Caco-2 (cell line): ENCODE measurements at regions of chr12 and their contacts with region 1.

Region 1: DNA sequence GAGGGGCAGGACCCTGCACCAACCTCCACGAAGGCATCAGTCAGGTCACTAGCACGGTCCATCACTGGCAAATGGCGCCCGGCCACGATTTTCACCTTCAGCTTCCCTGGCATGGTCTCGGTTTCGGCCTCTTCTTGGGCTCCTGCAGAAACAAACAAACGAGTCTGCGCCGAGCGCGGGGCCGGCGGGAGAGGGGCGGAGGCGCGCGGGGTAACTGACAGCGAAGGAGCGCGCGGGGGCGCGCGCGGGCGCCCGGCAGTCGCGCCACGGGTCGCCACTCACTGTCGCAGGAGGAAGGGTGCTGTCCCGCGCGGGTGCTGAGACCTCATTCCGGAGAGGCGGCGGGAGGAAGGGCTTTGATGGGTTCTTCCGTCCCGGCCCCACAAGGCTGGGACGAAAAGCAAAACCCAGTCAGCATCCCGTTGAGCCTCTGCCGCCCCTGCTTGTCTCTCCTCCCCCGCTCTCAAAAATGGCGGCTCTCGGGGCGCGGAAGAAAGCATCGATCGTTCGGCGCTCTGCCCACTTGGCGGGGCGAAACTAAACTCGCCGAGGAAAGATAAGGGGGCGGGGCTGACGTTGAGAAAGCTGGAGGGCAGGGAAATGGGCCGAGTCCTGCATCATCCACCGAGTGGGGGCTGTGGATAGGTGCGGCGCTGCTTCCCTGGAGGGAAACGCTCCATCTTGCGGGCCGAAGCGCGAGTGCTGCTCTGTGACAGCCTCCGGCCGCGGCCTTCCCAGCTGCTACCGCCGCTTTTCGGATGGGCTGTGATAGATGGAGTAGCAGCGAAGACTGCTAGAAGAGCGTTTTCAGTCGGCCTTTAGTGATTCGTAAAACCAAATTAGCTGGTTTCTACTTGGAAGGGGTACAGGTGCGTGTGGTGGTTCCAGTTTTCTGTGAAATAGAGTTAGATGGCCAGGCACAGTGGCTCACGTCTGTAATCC is at the start of gene C2CD5:
- DNase-seq: peak; percentile 100
- H3K4me3 ChIP-seq: peak within 1 kb of the TSS; percentile 69
- H3K4me3 Mint-ChIP-seq: peak within 1 kb of the TSS; percentile 87
- H3K27ac Mint-ChIP-seq: peak within 1 kb of the TSS; percentile 89
- H3K4me1 ChIP-seq: peaks cover 8% of the 10 kb centered on the region
- H3K4me1 Mint-ChIP-seq: peaks cover 18% of the 10 kb centered on the region
- H3K27me3 ChIP-seq: no peaks in the 10 kb centered on the region
- H3K27me3 Mint-ChIP-seq: no peaks in the 10 kb centered on the region
- CTCF ChIP-seq: peak in 1 of 2 experiments; percentile 58
- total RNA-seq, gene C2CD5: 44.6 and 51.5 TPM in 2 replicates

Region 2: DNA sequence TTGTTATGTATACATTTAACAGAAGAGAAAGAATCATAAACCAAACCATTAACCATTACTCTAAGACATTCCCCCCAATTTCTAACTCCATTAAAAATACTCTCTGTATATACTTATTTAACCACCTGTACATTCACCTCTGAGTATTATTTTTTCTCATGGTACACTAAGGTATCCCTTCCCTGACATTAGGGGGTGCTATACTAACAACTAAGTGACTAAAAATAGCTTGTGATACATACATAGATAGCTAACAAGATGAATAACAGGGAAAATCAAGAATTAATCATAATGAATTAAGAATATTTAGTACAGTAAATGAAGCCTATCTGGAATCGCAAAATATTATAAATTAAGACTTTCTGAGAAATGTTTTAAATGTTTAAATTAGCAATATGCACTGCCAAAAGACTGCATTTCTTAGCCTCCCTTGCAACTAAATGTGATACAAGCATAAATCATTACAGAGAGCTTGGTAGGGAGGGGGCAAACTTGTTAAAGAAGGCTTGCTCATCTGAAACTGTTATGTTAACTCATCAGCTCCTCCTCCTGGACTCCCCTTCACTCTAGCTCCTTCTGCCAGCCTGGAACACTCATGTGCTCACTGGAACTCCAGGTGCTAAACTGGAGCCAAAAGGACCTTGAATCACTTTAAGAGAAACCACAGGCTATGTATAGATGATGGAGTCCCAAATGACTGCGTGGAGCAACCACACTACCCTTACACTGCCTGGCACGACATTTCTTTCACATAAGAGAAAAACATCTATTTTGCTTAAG is 14.8 kb before region 1 on chr12:
- CTCF ChIA-PET with region 1: interaction called, 8 read pairs
- POLR2A ChIA-PET with region 1: interaction called, 3 read pairs
- intact Hi-C with region 1: loop called (anchors 1 kb)
- DNase-seq: peak in 1 of 2 experiments; percentile 32
- H3K4me3 ChIP-seq: no peak overlapping the region
- H3K4me3 Mint-ChIP-seq: no peak overlapping the region
- H3K27ac Mint-ChIP-seq: no peak overlapping the region
- H3K4me1 ChIP-seq: peaks cover 5% of the 10 kb centered on the region; the same call in 1 of the 2 replicates
- H3K4me1 Mint-ChIP-seq: peaks cover 6% of the 10 kb centered on the region
- H3K27me3 ChIP-seq: no peaks in the 10 kb centered on the region
- H3K27me3 Mint-ChIP-seq: no peaks in the 10 kb centered on the region
- CTCF ChIP-seq: peak; percentile 63 to 66

Region 3: GRCh38 chr12:22562036-22563028 is 18.0 kb after region 1 on chr12:
- CTCF ChIA-PET with region 1: interaction called, 3 read pairs
- POLR2A ChIA-PET with region 1: interaction called, 3 read pairs
- intact Hi-C with region 1: loop called (anchors 1 kb)
- DNase-seq: peak in 1 of 2 experiments; percentile 45
- H3K4me3 ChIP-seq: no peak overlapping the region
- H3K4me3 Mint-ChIP-seq: peak overlapping the region; percentile 8
- H3K27ac Mint-ChIP-seq: peak overlapping the region; percentile 15
- H3K4me1 ChIP-seq: peaks cover 28% of the 10 kb centered on the region
- H3K4me1 Mint-ChIP-seq: peaks cover 31% of the 10 kb centered on the region
- H3K27me3 ChIP-seq: no peaks in the 10 kb centered on the region
- H3K27me3 Mint-ChIP-seq: no peaks in the 10 kb centered on the region
- CTCF ChIP-seq: no peak

Region 4: GRCh38 chr12:22577667-22578066 is 33.4 kb after region 1 on chr12:
- CTCF ChIA-PET with region 1: no interaction called
- POLR2A ChIA-PET with region 1: no interaction called
- intact Hi-C with region 1: loop called (anchors 2 kb)
- DNase-seq: no peak
- H3K4me3 ChIP-seq: no peak overlapping the region
- H3K4me3 Mint-ChIP-seq: no peak overlapping the region
- H3K27ac Mint-ChIP-seq: no peak overlapping the region
- H3K4me1 ChIP-seq: peaks cover 6% of the 10 kb centered on the region
- H3K4me1 Mint-ChIP-seq: no peaks in the 10 kb centered on the region
- H3K27me3 ChIP-seq: no peaks in the 10 kb centered on the region
- H3K27me3 Mint-ChIP-seq: no peaks in the 10 kb centered on the region
- CTCF ChIP-seq: no peak

Region 5: GRCh38 chr12:22631863-22632463 is 87.7 kb after region 1 on chr12:
- CTCF ChIA-PET with region 1: interaction called, 3 read pairs
- POLR2A ChIA-PET with region 1: interaction called, 5 read pairs
- intact Hi-C with region 1: loop called (anchors 1 kb)
- DNase-seq: no peak
- H3K4me3 ChIP-seq: no peak overlapping the region
- H3K4me3 Mint-ChIP-seq: no peak overlapping the region
- H3K27ac Mint-ChIP-seq: no peak overlapping the region
- H3K4me1 ChIP-seq: peaks cover 19% of the 10 kb centered on the region
- H3K4me1 Mint-ChIP-seq: peaks cover 7% of the 10 kb centered on the region
- H3K27me3 ChIP-seq: no peaks in the 10 kb centered on the region
- H3K27me3 Mint-ChIP-seq: no peaks in the 10 kb centered on the region
- CTCF ChIP-seq: peak; percentile 71 to 78